H1 (cell line): ENCODE measurements at regions of chr3 and their contacts with region 1.

Region 1: DNA sequence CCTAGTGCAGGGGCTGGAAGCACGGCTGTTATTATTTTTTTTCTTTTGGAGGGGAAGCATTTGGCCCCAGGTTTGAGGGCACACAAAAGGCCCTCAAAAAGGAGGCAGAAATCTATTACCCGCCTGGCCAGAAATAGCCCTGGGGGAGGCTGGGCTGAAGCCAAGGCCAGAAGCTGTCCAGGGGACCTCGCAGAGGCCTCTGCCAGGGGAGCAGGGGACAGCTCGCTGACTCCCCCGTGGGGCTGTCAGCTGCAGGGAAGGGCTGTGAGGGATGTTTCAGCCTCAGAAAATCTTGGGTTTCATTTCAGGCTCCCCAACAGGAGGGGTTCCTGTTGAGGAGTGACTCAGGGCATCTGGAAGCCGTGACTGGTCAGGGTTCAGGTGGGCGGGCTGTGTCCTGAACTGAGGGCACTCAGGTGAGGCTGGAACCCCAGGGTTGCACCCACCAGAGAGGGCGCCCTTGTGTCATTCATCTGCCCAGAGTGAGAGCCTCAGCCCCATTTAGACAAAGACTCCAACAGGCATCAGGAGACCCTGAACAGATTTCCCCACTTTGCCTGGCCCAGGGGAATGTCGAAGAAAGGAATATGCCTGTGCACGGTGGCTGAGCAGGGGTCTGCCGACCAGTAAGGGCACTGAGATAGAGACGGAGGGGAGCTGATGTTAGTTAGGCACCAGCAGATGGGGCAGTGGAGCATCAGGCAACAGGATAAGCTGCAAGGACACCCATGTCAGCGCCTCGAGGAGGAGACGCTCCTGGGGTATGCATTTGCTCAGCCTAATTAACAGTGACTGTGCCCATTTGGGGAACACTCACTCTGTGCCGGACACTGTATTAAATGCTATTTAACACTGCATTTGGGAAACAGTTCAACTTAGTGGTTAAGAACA is 43.5 kb upstream of the SLC6A11 start:
- DNase-seq: peak; percentile 43 to 89
- H3K4me3 ChIP-seq: no peak overlapping the region
- H3K27ac ChIP-seq: no peak overlapping the region
- H3K4me1 ChIP-seq: no peaks in the 10 kb centered on the region; a peak in 1 of 7 replicates
- H3K27me3 ChIP-seq: peaks cover 0 to 5% (median under 1%) of the 10 kb centered on the region in 4 experiments; a peak in 2 of 7 replicates
- CTCF ChIP-seq: peak; percentile 59 to 74 (median 67)
- EP300 ChIP-seq: no peak
- POLR2A ChIP-seq: no peak
- RAD21 ChIP-seq: peak; percentile 28 to 29

Region 2: DNA sequence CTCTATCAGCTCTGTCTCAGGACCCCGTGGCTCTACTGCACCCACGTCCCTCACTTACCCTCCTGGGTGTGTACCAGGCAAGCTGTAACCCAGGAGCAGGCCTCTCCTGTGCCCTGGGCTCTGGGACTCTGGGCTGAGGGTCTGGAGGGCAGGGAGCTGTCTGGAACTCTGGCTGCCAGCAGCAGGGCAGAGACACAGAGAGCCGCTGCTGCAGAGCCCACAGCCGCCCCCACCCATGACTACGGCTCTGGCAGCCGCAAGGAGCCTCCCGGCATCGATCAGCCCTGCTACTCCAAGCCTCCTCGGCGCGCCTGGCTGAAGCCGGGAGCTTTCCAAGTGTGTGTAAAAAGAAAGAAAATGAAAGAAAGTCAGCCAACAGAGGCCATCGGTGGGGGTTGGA is 163.4 kb before region 1 on chr3:
- CTCF ChIA-PET with region 1: no interaction called
- POLR2A ChIA-PET with region 1: no interaction called
- DNase-seq: no peak
- H3K4me3 ChIP-seq: no peak overlapping the region
- H3K27ac ChIP-seq: no peak overlapping the region
- H3K4me1 ChIP-seq: no peaks in the 10 kb centered on the region
- H3K27me3 ChIP-seq: no peaks in the 10 kb centered on the region
- CTCF ChIP-seq: no peak
- EP300 ChIP-seq: no peak
- POLR2A ChIP-seq: no peak
- RAD21 ChIP-seq: no peak

Region 3: DNA sequence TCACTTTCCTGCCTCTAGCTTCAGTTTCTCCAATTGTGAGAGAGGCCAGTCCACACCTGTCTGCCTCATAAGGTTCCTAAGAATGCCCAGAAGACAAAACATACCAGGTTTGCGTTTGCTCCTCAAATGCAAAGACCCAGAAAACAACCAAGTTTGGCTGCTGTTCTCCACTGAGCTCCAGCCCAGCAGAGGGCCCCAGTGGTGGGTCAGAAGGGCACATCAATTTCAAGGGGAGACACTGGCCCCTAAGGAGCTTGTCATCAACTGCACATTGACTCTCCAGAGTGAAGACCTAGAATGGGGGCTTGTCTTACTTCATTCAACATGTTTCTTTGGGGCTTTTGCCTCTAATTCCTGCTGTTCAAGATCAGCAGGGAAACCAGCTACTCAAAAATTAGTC is 84.4 kb before region 1 on chr3:
- CTCF ChIA-PET with region 1: no interaction called
- POLR2A ChIA-PET with region 1: no interaction called
- DNase-seq: no peak
- H3K4me3 ChIP-seq: no peak overlapping the region
- H3K27ac ChIP-seq: no peak overlapping the region
- H3K4me1 ChIP-seq: no peaks in the 10 kb centered on the region
- H3K27me3 ChIP-seq: peaks cover 0 to 1% (median 0%) of the 10 kb centered on the region in 4 experiments; a peak in 2 of 7 replicates
- CTCF ChIP-seq: peak; percentile 48 to 83 (median 55)
- EP300 ChIP-seq: no peak
- POLR2A ChIP-seq: no peak
- RAD21 ChIP-seq: peak; percentile 49 to 61

Region 4: DNA sequence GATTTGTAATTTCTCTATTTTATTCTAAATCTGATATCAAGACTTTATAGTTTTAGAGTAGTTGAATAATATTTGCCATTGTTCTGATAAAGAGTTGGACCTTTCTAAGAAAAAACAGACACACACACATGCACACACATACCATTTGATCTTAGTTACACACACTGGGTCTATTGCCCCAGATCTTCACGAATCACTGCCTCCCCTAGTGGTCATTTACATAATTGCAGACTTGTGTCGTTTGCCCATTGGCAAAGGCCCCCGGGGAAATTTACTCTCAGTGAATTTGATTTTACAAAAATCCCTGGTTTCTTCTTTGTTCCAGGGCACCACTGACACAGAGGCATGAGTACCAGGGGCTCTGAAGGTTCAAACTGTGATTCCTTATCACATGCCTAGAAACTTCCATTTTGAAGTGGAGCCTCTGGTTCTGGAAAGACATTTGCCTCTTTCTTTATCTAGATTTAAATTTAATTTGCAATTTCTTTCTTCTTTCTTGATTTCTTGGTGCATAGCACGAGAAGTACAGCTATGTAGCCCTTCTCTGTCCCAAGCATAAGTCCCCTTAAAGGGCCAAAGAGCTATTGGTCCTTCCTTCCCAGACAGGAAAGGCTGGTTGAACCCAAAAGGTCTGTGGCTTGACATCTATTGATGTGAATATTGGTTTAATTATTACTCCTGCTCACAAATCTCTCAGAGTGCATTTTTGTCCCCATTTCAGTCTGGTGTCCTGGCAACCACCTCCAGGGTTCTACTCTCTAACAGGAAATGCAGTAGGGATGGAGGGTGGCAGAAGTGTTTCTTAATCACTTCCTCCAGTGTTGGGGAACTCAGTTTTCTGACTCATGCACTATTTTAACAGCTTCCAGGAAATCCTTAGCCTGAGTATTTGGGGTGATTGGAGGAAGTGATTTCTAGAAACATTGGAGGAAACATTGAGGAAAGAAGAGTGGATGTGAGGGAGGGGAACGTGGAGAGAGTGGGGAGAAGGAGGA is 11.1 kb after region 1 on chr3:
- CTCF ChIA-PET with region 1: interaction called, 42 read pairs
- POLR2A ChIA-PET with region 1: no interaction called
- DNase-seq: peak; percentile 5 to 66
- H3K4me3 ChIP-seq: no peak overlapping the region
- H3K27ac ChIP-seq: no peak overlapping the region
- H3K4me1 ChIP-seq: no peaks in the 10 kb centered on the region
- H3K27me3 ChIP-seq: no peaks in the 10 kb centered on the region; a peak in 1 of 7 replicates
- CTCF ChIP-seq: peak; percentile 44 to 76 (median 69)
- EP300 ChIP-seq: no peak
- POLR2A ChIP-seq: no peak
- RAD21 ChIP-seq: peak; percentile 56 to 69

Region 5: DNA sequence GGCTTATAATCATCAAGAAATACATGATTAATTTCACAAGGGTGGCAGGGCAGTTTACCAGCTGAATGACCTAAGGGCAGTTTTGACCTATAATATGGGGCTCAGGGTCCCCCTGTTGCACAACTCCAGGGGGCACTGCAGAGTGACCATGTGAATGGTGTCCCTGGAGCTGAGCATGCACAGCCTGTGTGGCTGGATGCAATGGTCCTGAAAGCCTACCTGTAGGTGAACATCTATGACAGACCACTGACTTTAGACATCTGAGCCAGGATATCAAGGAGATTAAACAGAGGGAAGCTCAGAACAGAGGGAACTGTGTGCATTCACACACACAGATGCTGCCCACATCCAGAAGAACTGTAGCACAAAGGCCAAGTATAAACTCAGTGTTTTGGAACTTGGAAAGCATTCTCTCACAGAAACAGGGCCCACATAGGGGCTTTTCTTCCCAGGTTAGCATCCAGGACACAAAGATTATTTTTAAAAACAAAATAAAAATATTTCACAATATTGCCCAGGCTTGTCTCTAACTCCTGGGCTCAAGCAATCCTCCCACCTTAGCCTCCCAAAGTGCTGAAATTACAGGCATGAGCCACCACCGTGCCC is 35.7 kb after region 1 on chr3:
- CTCF ChIA-PET with region 1: interaction called, 10 read pairs
- POLR2A ChIA-PET with region 1: no interaction called
- DNase-seq: no peak
- H3K4me3 ChIP-seq: no peak overlapping the region
- H3K27ac ChIP-seq: no peak overlapping the region
- H3K4me1 ChIP-seq: no peaks in the 10 kb centered on the region
- H3K27me3 ChIP-seq: peaks cover 0 to 2% (median 0%) of the 10 kb centered on the region in 4 experiments; a peak in 3 of 7 replicates
- CTCF ChIP-seq: peak in 1 of 3 experiments; percentile 27; a peak in 1 of 4 replicates
- EP300 ChIP-seq: no peak
- POLR2A ChIP-seq: no peak
- RAD21 ChIP-seq: no peak

Region 6: DNA sequence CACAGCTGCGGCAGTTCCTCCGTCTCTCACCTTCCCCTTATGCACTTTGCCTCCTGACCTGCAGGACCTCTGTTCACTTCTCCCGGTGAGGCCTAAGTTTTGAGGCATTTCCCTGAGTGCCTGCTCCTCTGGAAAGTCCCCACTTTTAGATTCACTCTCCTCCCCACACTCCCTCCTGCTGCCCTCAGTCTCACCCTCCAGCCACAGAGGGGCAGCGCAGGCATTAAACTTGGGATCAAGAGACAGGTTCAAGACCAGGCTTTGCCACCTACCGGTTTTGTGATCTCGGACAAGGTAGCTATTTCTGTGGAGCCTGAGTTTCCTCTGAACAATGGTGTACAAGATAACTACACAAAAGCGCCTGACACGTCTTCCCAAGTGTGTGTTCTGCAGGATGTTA is 62.9 kb after region 1 on chr3:
- CTCF ChIA-PET with region 1: interaction called, 20 read pairs
- POLR2A ChIA-PET with region 1: no interaction called
- DNase-seq: peak in 1 of 2 experiments; percentile 49
- H3K4me3 ChIP-seq: no peak overlapping the region
- H3K27ac ChIP-seq: no peak overlapping the region
- H3K4me1 ChIP-seq: peaks cover 0 to 2% (median 0%) of the 10 kb centered on the region in 4 experiments; a peak in 1 of 7 replicates
- H3K27me3 ChIP-seq: no peaks in the 10 kb centered on the region; a peak in 1 of 7 replicates
- CTCF ChIP-seq: peak; percentile 56 to 68 (median 59)
- EP300 ChIP-seq: no peak
- POLR2A ChIP-seq: no peak
- RAD21 ChIP-seq: peak; percentile 48 to 65